ENCODE measurements at regions of chr19 and their contacts with region 1.

Region 1: GRCh38 chr19:36214386-36215275 is at the starts of genes ZNF146 and ZNF565:
- DNase-seq: peak; percentile 99
- ATAC-seq: peak; percentile 88
- H3K4me3 Mint-ChIP-seq: no peak within 1 kb of the TSS
- H3K27ac Mint-ChIP-seq: no peak within 1 kb of the TSS
- H3K4me1 Mint-ChIP-seq: peaks cover 25% of the 10 kb centered on the region
- H3K27me3 Mint-ChIP-seq: no peaks in the 10 kb centered on the region
- total RNA-seq, gene ZNF146: 105 to 111 TPM
- total RNA-seq, gene ZNF565: 2.8 to 2.9 TPM

Region 2: DNA sequence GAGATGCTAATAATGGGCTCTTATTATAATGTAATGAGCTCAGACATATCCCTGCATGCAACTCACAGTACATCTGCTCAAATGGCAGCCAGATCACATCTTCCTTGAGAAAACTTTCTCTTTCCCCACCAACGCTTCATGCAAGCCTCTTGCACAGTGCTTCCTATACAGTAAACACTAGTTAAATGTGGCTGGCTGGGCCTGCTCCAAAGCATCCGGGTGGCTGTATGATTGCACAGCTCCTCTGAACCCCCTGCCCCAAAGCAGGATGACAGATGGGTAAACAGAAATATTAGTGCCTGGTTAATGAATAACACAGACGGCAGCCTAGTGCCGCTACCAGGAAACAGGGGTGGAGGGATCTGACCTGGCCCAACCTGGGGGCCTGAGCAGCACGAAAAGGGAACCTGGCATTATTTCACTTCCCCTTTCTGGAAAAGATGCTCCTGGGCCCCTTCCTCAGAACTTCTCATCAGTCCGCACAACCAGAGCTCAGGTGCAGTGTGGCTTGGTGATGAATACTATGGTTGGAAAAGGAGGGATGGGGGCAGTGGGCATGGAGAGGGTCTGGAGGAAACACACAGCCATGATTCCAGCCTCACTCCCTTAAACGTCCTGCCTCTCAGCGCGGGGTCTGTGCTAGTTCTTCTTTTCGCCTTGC is 755.8 kb before region 1 on chr19:
- CTCF ChIA-PET with region 1: no interaction called
- POLR2A ChIA-PET with region 1: no interaction called
- intact Hi-C with region 1: no loop called
- DNase-seq: no peak
- ATAC-seq: no peak
- H3K4me3 Mint-ChIP-seq: no peak overlapping the region
- H3K27ac Mint-ChIP-seq: no peak overlapping the region
- H3K4me1 Mint-ChIP-seq: peaks cover 26% of the 10 kb centered on the region
- H3K27me3 Mint-ChIP-seq: no peaks in the 10 kb centered on the region

Region 3: DNA sequence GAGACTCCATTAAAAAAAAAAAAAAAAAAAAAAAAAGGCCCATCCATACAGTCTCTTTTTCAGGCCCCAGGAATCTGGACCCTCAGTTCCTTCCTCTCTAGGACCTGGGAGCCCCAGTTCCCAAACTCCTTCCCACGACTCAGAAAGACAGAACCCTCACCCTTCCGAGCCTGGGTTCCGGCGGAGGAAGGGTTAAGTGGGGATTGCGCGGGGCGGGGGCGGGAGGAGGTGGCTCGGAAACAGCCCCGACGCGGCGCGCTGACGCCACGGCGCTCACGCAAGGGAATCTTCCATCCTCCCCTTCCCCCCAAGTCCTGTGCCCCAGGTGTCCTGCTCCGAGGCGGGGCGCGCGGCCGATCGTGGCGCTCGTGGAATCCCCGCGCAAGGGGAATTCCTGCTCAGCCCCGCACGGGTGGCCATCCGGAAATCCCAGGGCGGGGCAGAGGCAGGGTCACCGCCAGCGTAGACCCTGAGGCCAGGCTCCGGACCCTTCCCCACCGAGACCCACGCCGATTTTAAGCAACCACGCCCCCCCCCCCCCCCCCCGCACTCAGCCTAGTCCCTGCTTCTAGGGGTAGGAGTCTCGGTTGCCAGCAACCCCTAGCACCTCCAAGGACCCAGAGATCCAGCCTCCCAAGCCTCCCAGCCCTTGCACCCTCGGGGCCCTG is 314.9 kb before region 1 on chr19:
- CTCF ChIA-PET with region 1: no interaction called
- POLR2A ChIA-PET with region 1: interaction called, 6 read pairs
- intact Hi-C with region 1: loop called in 1 of 2 experiments (anchors 1 kb)
- DNase-seq: peak; percentile 94
- ATAC-seq: peak; percentile 54
- H3K4me3 Mint-ChIP-seq: peak overlapping the region; percentile 75
- H3K27ac Mint-ChIP-seq: peak overlapping the region; percentile 94
- H3K4me1 Mint-ChIP-seq: peaks cover 65% of the 10 kb centered on the region
- H3K27me3 Mint-ChIP-seq: no peaks in the 10 kb centered on the region

Region 4: DNA sequence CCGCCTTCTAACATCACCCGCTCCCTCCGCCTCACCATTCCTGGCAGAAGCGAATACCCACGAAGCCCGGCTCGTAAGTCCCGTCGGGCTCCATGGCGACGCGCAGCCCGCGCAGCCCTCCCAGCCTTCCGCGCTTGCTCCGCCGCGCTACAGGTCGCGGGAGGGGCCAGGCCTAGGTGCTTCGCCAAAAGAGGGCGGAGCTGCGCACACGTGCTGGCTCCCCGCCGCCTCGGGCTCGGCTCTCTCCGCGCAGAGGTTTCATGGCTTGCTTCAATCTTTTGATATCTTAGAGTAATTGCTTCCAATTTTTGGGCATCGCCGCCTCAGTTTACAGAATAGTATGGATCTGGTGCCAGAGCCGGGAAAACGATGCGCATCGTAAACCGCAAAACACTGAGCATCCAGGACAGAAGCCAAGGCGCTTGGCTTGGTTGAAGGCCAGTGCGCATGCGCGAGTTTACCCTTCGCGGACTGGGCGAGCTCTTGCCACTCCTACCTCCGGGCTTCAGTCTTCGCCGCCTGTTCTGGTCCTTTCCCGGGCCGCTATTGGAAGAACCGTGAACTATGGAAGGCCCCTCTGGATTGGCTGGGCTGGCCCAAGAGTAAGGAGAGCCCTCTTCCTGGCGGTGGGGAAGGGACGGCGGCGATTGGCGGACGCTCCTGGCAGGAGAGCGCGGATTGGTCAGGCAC is 99.7 kb before region 1 on chr19 and contains the start of gene POLR2I:
- CTCF ChIA-PET with region 1: no interaction called
- POLR2A ChIA-PET with region 1: interaction called, 8 read pairs
- intact Hi-C with region 1: loop called in 1 of 2 experiments (anchors 1 kb)
- DNase-seq: peak; percentile 99
- ATAC-seq: peak; percentile 95
- H3K4me3 Mint-ChIP-seq: peak within 1 kb of the TSS; percentile 98
- H3K27ac Mint-ChIP-seq: peak within 1 kb of the TSS; percentile 93
- H3K4me1 Mint-ChIP-seq: peaks cover 29% of the 10 kb centered on the region
- H3K27me3 Mint-ChIP-seq: no peaks in the 10 kb centered on the region
- total RNA-seq, gene POLR2I: 89.6 to 97.3 TPM

Region 5: GRCh38 chr19:36418287-36419001 is 203.8 kb after region 1 on chr19 and contains the start of gene ZFP82:
- CTCF ChIA-PET with region 1: no interaction called
- POLR2A ChIA-PET with region 1: no interaction called
- intact Hi-C with region 1: loop called in 1 of 2 experiments (anchors 1 kb)
- DNase-seq: peak; percentile 89
- ATAC-seq: peak; percentile 90
- H3K4me3 Mint-ChIP-seq: peak within 1 kb of the TSS; percentile 94
- H3K27ac Mint-ChIP-seq: peak within 1 kb of the TSS; percentile 97
- H3K4me1 Mint-ChIP-seq: peaks cover 12% of the 10 kb centered on the region
- H3K27me3 Mint-ChIP-seq: peaks cover 13% of the 10 kb centered on the region
- total RNA-seq, gene ZFP82: 8.4 to 8.8 TPM

Region 6: DNA sequence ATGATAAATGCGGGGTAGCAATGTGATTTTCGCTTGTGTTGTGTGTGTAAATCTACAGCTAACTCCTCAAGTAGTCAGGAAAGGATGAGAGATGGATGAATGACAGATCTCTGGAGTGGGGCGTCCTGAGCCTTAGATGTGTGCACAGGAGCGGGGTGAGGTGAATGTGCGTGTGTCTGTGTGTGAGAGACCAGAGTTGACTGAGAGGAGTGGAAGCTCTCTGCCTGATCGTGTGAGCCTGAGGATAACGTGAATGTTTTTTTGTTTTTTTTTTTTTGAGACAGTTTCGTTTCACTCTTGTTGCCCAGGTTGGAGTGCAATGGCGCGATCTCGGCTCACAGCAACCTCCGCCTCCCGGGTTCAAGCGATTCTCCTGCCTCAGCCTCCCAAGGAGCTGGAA is 451.2 kb after region 1 on chr19:
- CTCF ChIA-PET with region 1: no interaction called
- POLR2A ChIA-PET with region 1: no interaction called
- intact Hi-C with region 1: loop called in 1 of 2 experiments (anchors 1 kb)
- DNase-seq: no peak
- ATAC-seq: no peak
- H3K4me3 Mint-ChIP-seq: peak overlapping the region; percentile 98
- H3K27ac Mint-ChIP-seq: peak overlapping the region; percentile 99
- H3K4me1 Mint-ChIP-seq: peaks cover 26% of the 10 kb centered on the region
- H3K27me3 Mint-ChIP-seq: no peaks in the 10 kb centered on the region

Region 7: GRCh38 chr19:36915992-36916830 is 701.6 kb after region 1 on chr19 and contains the starts of genes ZNF568 and ZNF829:
- CTCF ChIA-PET with region 1: no interaction called
- POLR2A ChIA-PET with region 1: no interaction called
- intact Hi-C with region 1: loop called in 1 of 2 experiments (anchors 1 kb)
- DNase-seq: peak; percentile 97
- ATAC-seq: peak; percentile 98
- H3K4me3 Mint-ChIP-seq: peak within 1 kb of the TSS; percentile 88
- H3K27ac Mint-ChIP-seq: peak within 1 kb of the TSS; percentile 98
- H3K4me1 Mint-ChIP-seq: peaks cover 15% of the 10 kb centered on the region
- H3K27me3 Mint-ChIP-seq: no peaks in the 10 kb centered on the region
- total RNA-seq, gene ZNF568: 6.5 to 8.4 TPM
- total RNA-seq, gene ZNF829: 7.1 TPM

Measured in activated CD4-positive, alpha-beta T cell treated with anti-CD3 and anti-CD28 coated beads for 36 hours (primary cell).